ENCODE measurements at regions of chr3 and their contacts with region 1.

Region 1: DNA sequence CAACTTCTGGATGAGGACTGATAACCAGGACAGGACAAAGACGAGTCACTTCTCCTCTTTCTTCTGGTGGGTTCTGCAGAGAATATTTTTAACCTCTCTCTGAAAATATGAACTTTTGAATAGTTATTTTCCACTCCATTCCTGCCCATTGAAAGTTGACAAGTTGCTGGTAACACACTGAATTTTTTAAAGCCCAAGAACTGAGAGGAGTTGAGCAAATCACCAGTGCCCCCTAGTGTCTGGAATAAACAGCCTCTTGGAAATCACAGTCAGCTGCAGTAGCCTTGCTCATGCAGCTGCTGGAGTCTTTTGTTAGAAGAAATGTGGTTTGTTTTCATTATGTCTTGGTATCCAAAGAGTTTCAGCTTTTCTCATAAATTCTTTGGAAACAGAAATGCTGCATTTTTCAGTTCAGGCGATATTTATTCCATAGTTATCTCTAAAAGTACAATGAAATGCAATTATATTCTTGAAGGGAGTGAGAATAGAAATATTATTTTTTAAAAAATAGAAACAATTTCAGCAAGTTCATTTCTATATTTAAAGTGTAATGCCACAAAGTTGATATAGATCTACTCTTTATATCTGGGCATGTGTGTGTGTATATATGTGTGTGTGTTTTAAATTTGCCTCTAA is 741.0 kb upstream of the CBLB start:
- DNase-seq: peak; percentile 20
- CTCF ChIP-seq: peak; percentile 76

Region 2: GRCh38 chr3:105385819-105386508 is 1223.8 kb before region 1 on chr3:
- in situ Hi-C with region 1: loop called (anchors 25 kb)
- DNase-seq: no peak
- CTCF ChIP-seq: no peak

Region 3: GRCh38 chr3:105676621-105677300 is 933.0 kb before region 1 on chr3:
- in situ Hi-C with region 1: loop called (anchors 10 kb)
- DNase-seq: no peak
- CTCF ChIP-seq: no peak

Region 4: DNA sequence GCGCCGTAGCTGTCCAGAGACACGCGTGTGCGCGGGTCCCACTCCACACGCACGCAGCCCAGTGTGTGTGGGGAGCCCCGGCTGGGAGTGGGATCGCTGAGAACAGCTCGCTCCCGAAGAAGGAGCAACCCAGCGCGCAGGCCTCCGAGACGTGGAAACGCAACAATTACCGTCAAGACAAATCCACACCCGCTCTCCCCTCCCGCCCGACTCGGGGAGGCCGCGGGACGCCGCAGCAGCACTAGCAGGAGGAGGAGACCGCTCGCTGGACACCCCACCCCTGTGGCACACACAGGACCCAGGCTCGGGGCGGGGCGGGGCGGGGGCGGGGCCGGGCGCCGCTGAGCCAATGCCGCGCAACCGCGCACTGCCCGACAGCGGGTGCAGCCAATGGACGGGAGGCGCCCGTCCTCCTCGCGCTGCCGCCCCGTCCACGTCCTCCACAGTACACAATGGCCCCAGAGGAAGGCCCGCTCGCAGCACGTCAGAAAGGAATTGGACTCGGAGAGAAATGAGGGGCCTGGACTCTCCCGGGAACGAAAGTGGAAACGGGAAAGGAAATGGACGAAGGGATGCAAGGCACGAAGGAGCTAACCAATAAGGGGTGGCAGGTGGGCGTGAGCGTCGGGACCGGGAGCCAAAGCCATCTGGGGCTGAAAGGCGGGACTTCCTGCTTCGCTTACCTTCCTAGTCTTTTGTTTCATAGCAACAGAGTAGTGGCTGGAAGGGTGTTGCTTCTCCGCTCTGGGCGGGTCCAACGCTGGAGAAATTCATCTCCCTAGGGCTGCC is 740.8 kb before region 1 on chr3 and contains the start of gene CBLB:
- in situ Hi-C with region 1: loop called (anchors 25 kb)
- DNase-seq: peak; percentile 92
- CTCF ChIP-seq: no peak

Region 5: GRCh38 chr3:106401666-106402490 is 207.9 kb before region 1 on chr3:
- in situ Hi-C with region 1: no loop called
- DNase-seq: no peak
- CTCF ChIP-seq: no peak